ENCODE measurements at regions of chr10 and their contacts with region 1.

Region 1: DNA sequence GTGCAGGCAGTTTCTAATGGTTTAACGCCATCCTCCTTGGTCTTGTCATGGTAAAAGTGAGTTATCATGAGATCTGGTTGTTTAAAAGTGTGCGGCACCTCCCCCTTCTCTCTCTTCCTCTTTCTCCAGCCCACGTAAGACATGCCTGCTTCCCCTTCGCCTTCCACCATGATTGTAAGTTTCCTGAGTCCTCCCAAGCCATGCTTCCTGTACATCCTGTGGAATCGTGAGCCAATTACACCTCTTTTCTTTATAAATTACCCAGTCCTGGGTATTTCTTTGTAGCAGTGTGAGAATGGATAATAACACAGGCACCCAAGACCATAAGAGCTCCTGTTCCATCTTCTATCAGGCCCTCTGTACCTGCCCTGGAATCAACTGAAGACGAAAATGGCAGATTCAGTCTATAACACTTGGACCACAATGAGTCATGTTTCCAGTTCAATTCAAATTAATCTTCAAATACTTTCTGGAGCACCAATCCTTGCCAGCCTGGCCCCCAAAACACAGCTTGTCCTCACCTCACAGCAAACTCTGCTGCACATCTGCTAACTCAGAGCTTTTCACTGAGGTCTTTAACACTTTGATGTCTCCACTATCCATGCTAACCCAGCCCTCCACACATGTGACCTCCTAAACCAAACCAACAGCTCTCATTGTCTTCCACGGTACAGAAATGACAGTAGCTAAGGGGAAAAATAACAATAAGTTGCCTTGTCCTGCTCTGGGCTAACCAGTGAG is 73.2 kb downstream of the SFMBT2 start:
- DNase-seq: no peak
- H3K4me3 ChIP-seq: no peak overlapping the region
- H3K27ac ChIP-seq: no peak overlapping the region
- H3K4me1 ChIP-seq: no peaks in the 10 kb centered on the region
- H3K27me3 ChIP-seq: no peaks in the 10 kb centered on the region
- CTCF ChIP-seq: no peak
- POLR2A ChIP-seq: no peak

Region 2: DNA sequence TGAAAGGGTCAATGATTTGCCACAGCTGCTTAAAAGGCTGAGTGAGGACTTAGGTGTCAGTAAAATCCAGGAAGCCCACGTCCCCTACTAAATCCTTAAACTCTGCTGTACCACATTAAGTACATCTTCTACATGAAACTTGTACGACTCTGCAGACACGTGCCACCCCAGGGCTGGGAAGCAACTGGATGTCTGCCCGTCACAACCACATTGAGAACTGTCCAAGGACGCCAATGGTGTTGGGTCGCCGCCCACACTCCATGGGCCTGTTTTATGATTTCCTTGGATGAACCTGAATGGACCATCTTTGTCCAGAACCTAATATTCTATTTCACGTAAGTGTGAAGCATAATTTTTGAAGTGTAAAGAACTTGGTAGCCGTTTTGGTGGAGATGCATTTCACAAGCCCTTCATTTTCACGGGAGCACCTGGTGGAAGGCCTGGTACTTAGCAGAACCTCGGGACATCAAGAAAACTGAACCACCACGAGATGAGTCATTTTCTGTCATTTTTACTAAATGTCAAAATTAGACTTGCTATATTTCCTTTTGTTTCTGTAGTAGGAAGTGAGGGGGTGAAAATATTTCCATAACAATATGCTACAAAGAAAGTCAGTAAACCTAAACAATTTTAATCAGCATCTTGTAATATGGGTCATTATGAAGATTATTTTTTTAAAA is 61.7 kb before region 1 on chr10:
- intact Hi-C with region 1: loop called (anchors 2 kb)
- DNase-seq: no peak
- H3K4me3 ChIP-seq: no peak overlapping the region
- H3K27ac ChIP-seq: no peak overlapping the region
- H3K4me1 ChIP-seq: no peaks in the 10 kb centered on the region
- H3K27me3 ChIP-seq: no peaks in the 10 kb centered on the region
- CTCF ChIP-seq: no peak
- POLR2A ChIP-seq: no peak

Region 3: DNA sequence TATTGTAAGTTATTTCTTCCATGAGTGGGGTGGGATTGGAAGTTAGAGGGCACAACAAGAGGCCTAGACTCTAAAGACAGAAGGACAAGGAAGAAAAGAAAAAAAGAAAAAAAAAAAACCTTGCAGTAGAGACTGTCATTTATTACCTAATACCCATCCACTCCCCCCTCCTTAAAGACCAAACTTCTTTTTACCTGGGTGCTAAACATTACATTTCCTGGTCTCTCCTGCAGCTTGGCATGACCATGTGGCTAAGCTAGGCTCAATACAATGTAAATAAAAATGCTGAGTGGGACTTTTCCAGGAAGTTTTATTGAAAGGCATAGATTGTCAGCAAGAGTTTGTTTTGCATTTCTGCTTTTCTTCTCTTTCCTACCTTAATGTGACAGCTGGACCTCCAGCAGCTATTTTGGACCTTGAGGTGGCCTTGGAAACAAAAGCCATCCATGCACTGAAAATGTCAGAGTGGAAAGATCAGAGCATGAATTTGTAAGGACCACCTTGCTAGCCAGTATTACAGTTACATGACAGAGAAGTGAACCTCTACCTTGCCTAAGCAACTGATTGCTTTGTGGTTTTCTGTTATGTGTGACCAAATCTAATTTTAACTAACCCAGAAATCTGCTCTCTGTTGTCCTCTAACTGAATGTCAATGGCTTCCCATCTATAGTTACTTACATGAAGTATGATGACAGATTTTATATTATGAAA is 154.5 kb after region 1 on chr10:
- intact Hi-C with region 1: no loop called
- DNase-seq: no peak
- H3K4me3 ChIP-seq: no peak overlapping the region
- H3K27ac ChIP-seq: no peak overlapping the region
- H3K4me1 ChIP-seq: no peaks in the 10 kb centered on the region
- H3K27me3 ChIP-seq: no peaks in the 10 kb centered on the region
- CTCF ChIP-seq: no peak
- POLR2A ChIP-seq: no peak

Region 4: DNA sequence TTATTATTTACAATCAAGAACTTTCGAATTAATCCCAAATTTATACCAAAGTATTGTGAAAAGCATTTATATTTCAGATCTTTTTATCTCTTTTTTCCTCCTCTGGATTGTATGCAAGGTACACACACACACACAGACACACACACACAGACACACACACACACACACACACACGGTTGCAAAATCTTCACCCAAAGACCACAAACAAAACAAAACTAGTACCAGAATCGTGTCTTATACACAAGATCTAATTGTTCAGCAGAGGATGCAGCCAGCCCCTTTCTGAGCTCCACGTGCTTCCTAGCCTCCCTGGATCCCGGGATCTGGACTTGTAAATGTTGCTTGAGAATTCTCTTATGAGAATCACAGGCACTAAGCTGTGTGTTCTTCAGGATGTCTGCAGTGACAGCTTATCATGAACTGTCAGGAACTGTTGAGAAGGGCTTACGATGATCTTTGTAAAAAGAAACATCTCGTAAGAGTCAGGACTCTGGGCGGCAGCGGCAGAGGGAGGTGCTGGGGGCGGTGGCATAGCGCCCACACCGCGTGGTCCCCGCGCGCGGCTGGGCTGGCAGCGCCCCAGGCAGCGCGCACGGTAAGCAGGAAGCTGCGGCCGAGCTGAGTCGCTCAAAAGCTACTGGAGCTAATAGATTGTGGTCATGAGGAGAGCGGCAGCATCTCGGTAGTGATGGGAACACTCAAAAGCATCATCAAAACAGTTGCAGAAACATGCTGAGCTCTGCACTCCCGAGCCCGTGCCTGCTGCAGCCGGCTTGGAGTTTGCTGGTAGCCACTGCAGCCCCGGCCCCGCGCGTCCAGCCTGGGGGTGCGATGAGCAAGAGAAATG is 994.5 kb after region 1 on chr10:
- intact Hi-C with region 1: no loop called
- DNase-seq: peak in 1 of 2 donors; percentile 45
- H3K4me3 ChIP-seq: peak overlapping the region; percentile 10 to 63 (median 45)
- H3K27ac ChIP-seq: no peak overlapping the region
- H3K4me1 ChIP-seq: no peaks in the 10 kb centered on the region
- H3K27me3 ChIP-seq: no peaks in the 10 kb centered on the region
- CTCF ChIP-seq: no peak
- POLR2A ChIP-seq: no peak